T-cell (primary cell): ENCODE measurements at regions of chr6 and their contacts with region 1.

Region 1: GRCh38 chr6:79964607-79965081 is 17.3 kb upstream of the ELOVL4 start:
- DNase-seq: peak in 6 of 35 experiments; percentile 1 to 43 (median 12)
- ATAC-seq: peak in 2 of 4 experiments; percentile 74 to 81
- H3K4me3 ChIP-seq: no peak overlapping the region
- H3K4me3 Mint-ChIP-seq: no peak overlapping the region
- H3K27ac ChIP-seq: peak overlapping the region; percentile 61
- H3K27ac Mint-ChIP-seq: peak overlapping the region; percentile 64 to 69
- H3K4me1 ChIP-seq: peaks cover 3 to 5% of the 10 kb centered on the region in 2 experiments
- H3K4me1 Mint-ChIP-seq: peaks cover 0 to 15% (median 8%) of the 10 kb centered on the region in 3 donors
- H3K27me3 ChIP-seq: peaks cover 0 to 4% of the 10 kb centered on the region in 2 experiments
- H3K27me3 Mint-ChIP-seq: peaks cover 0 to 14% of the 10 kb centered on the region in 2 donors

Region 2: DNA sequence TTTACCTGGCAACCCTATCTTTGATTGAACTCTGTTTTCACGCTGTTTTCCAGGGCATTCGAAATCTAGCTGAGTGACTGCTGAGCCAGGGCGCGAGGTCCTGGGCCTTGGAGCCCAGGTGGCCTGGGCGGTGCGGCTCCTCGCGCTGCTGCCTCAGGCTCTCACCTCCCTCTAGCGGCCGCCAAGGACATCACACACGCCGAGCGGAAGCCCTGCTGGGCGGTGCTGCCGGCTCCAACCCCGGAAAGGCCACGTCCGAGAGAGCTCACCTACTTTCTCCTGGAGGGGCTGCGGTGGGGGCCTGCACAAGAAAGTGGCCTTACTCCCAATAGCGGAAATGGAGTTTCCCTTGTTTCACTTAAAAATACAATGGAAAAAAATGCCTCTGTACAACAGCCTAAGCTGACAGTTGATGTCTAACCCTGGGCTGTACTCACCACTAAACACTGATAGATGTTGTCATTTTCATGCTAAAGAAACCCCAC is 95.0 kb before region 1 on chr6:
- CTCF ChIA-PET with region 1: no interaction called
- POLR2A ChIA-PET with region 1: no interaction called
- DNase-seq: peak; percentile 45 to 84 (median 66)
- ATAC-seq: peak; percentile 98 to 100 (median 100)
- H3K4me3 ChIP-seq: peak overlapping the region in 1 of 2 donors; percentile 28
- H3K4me3 Mint-ChIP-seq: peak overlapping the region; percentile 32 to 50 (median 48)
- H3K27ac ChIP-seq: no peak overlapping the region
- H3K27ac Mint-ChIP-seq: peak overlapping the region; percentile 7 to 47
- H3K4me1 ChIP-seq: peaks cover 0 to 9% of the 10 kb centered on the region in 2 experiments
- H3K4me1 Mint-ChIP-seq: peaks cover 9 to 23% (median 19%) of the 10 kb centered on the region in 3 donors
- H3K27me3 ChIP-seq: no peaks in the 10 kb centered on the region
- H3K27me3 Mint-ChIP-seq: peaks cover 4 to 6% of the 10 kb centered on the region in 2 donors

Region 3: GRCh38 chr6:79993012-79993910 is 28.6 kb after region 1 on chr6:
- CTCF ChIA-PET with region 1: no interaction called
- POLR2A ChIA-PET with region 1: no interaction called
- DNase-seq: no peak
- ATAC-seq: no peak
- H3K4me3 ChIP-seq: no peak overlapping the region
- H3K4me3 Mint-ChIP-seq: no peak overlapping the region
- H3K27ac ChIP-seq: no peak overlapping the region
- H3K27ac Mint-ChIP-seq: no peak overlapping the region
- H3K4me1 ChIP-seq: no peaks in the 10 kb centered on the region
- H3K4me1 Mint-ChIP-seq: no peaks in the 10 kb centered on the region
- H3K27me3 ChIP-seq: no peaks in the 10 kb centered on the region
- H3K27me3 Mint-ChIP-seq: no peaks in the 10 kb centered on the region

Region 4: GRCh38 chr6:80094017-80094416 is 129.4 kb after region 1 on chr6:
- CTCF ChIA-PET with region 1: interaction called in 1 of 2 experiments, 11 read pairs
- POLR2A ChIA-PET with region 1: no interaction called
- DNase-seq: peak in 4 of 35 experiments; percentile 2 to 52 (median 6)
- ATAC-seq: no peak
- H3K4me3 ChIP-seq: no peak overlapping the region
- H3K4me3 Mint-ChIP-seq: no peak overlapping the region
- H3K27ac ChIP-seq: no peak overlapping the region
- H3K27ac Mint-ChIP-seq: no peak overlapping the region
- H3K4me1 ChIP-seq: no peaks in the 10 kb centered on the region
- H3K4me1 Mint-ChIP-seq: peaks cover 0 to 6% (median 5%) of the 10 kb centered on the region in 3 donors
- H3K27me3 ChIP-seq: no peaks in the 10 kb centered on the region
- H3K27me3 Mint-ChIP-seq: peaks cover 0 to 3% of the 10 kb centered on the region in 2 donors